ENCODE measurements at regions of chr2 and their contacts with region 1.

Region 1: DNA sequence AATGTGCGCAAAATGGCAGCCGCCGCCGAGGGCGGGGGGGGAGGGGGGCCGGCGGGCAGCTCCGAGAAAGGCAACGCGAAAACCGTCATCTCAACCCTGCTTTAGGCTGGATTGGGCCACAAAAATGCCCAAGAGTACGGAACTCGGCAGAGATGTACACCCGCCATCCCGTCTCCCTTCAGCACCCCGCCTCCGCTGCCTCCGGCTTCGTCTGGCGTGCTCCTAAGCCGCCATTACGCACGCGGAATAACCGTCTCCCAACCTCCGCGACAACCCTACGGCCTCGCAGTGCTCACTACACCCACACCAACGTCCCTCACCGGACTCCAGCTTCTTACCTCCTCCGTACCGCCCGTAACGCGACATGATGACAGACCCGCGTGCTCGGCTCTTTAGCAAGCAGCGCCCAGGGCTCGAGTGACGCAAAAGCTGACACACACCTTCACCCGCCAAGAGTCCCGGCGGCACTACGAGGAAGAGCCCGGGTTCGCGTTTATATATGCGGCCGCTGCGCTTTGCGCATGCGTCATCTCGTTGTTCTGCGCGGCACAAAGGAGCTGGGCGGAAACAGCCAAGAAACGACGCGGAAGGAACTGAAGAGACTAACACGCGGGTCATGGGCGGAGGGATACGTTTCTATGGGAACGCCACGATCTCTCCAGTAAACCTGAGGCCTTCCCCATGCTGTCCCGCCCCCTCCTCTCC is at the start of gene SRSF7:
- DNase-seq: peak; percentile 98
- H3K4me3 Mint-ChIP-seq: peak within 1 kb of the TSS; percentile 90
- H3K27ac Mint-ChIP-seq: peak within 1 kb of the TSS; percentile 97
- H3K4me1 Mint-ChIP-seq: peaks cover 30% of the 10 kb centered on the region
- H3K27me3 Mint-ChIP-seq: no peaks in the 10 kb centered on the region
- CTCF ChIP-seq: no peak
- total RNA-seq, gene SRSF7: 196 and 275 TPM in 2 replicates

Region 2: DNA sequence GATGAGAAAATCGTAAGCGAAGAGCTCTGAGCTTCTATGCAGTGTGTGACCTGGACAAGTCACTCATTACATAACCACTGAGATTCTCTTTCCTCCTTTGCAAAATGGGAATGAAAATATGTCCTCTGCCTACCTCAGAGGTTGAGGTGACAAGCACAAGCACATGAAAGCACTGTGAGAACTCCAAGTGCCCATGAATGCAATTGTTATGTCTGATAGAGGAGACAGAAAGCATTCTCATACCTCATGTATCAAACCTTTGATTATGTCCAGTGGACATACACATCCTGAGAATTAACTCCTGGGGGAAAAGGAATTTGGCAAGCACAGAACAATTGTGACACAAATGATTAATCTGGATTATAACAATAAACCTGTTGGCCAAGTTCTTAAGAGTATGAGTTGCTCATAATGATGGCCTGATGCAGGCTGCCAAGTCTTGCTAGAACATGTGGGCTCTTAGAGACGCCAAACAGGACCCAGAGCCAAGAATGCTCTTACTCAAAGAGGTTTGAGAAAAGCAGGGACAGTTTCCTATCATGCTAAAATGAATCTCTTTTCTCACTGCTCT is 834.4 kb before region 1 on chr2:
- CTCF ChIA-PET with region 1: no interaction called
- POLR2A ChIA-PET with region 1: no interaction called
- intact Hi-C with region 1: no loop called
- DNase-seq: peak; percentile 98
- H3K4me3 Mint-ChIP-seq: peak overlapping the region; percentile 44
- H3K27ac Mint-ChIP-seq: peak overlapping the region; percentile 51
- H3K4me1 Mint-ChIP-seq: peaks cover 32% of the 10 kb centered on the region
- H3K27me3 Mint-ChIP-seq: no peaks in the 10 kb centered on the region
- CTCF ChIP-seq: no peak

Region 3: GRCh38 chr2:38277245-38278116 is 473.6 kb before region 1 on chr2:
- CTCF ChIA-PET with region 1: no interaction called
- POLR2A ChIA-PET with region 1: no interaction called
- intact Hi-C with region 1: no loop called
- DNase-seq: no peak
- H3K4me3 Mint-ChIP-seq: no peak overlapping the region
- H3K27ac Mint-ChIP-seq: no peak overlapping the region
- H3K4me1 Mint-ChIP-seq: peaks cover 8% of the 10 kb centered on the region
- H3K27me3 Mint-ChIP-seq: no peaks in the 10 kb centered on the region
- CTCF ChIP-seq: no peak

Region 4: DNA sequence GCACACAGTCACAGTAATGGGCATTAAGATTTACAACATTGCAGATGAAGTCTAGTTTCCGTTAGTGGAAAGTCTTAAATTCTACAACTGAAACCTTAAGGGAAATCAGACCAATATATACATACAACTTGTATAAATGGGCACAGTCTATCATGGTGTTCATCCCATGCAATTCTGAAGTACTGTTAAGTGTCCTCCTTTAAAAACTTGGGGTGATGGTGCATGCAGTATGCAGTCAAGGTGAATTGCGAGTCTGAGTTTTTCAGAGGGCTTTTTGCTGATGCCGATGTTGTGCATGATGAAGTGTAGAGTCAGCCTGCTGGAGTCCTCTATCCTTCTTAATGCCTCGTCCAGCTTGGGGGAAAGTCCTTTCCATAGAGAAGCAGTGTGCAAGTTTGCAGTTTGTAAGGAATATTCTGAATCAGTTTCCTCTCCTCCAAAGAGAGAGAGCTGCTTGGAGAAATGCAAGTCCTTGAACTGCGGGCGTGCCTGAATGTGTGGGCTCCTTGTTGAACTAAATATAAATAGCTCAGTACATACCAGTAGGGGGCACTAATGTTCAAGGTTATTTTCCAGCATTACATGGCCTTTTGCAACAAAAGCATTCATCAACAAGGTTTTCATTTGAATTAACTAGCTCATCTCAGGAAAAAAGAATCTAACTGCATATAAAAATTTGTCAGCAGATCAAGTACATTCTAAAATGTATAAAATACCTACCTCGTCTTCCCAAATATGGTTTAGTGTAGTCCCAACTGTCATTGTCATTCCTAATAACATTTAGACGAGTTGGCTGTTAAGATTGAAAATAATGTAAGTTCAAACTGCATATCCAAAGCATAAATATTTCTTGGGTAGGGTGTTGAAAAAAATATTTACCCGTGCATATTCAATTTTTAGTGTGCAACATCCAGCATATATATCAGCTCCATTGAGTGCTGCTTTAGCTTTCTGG is 169.6 kb before region 1 on chr2:
- CTCF ChIA-PET with region 1: interaction called, 17 read pairs
- POLR2A ChIA-PET with region 1: interaction called, 14 read pairs
- intact Hi-C with region 1: no loop called
- DNase-seq: peak; percentile 77
- H3K4me3 Mint-ChIP-seq: no peak overlapping the region
- H3K27ac Mint-ChIP-seq: no peak overlapping the region
- H3K4me1 Mint-ChIP-seq: peaks cover 5% of the 10 kb centered on the region
- H3K27me3 Mint-ChIP-seq: no peaks in the 10 kb centered on the region
- CTCF ChIP-seq: peak; percentile 56

Region 5: GRCh38 chr2:38690499-38691294 is 60.3 kb before region 1 on chr2:
- CTCF ChIA-PET with region 1: no interaction called
- POLR2A ChIA-PET with region 1: interaction called, 20 read pairs
- intact Hi-C with region 1: no loop called
- DNase-seq: peak; percentile 84
- H3K4me3 Mint-ChIP-seq: no peak overlapping the region
- H3K27ac Mint-ChIP-seq: peak overlapping the region; percentile 86
- H3K4me1 Mint-ChIP-seq: peaks cover 25% of the 10 kb centered on the region
- H3K27me3 Mint-ChIP-seq: no peaks in the 10 kb centered on the region
- CTCF ChIP-seq: no peak

Region 6: GRCh38 chr2:38771632-38772031 is 20.6 kb after region 1 on chr2:
- CTCF ChIA-PET with region 1: no interaction called
- POLR2A ChIA-PET with region 1: interaction called, 13 read pairs
- intact Hi-C with region 1: no loop called
- DNase-seq: no peak
- H3K4me3 Mint-ChIP-seq: no peak overlapping the region
- H3K27ac Mint-ChIP-seq: no peak overlapping the region
- H3K4me1 Mint-ChIP-seq: no peaks in the 10 kb centered on the region
- H3K27me3 Mint-ChIP-seq: peaks cover 19% of the 10 kb centered on the region
- CTCF ChIP-seq: no peak

Region 7: DNA sequence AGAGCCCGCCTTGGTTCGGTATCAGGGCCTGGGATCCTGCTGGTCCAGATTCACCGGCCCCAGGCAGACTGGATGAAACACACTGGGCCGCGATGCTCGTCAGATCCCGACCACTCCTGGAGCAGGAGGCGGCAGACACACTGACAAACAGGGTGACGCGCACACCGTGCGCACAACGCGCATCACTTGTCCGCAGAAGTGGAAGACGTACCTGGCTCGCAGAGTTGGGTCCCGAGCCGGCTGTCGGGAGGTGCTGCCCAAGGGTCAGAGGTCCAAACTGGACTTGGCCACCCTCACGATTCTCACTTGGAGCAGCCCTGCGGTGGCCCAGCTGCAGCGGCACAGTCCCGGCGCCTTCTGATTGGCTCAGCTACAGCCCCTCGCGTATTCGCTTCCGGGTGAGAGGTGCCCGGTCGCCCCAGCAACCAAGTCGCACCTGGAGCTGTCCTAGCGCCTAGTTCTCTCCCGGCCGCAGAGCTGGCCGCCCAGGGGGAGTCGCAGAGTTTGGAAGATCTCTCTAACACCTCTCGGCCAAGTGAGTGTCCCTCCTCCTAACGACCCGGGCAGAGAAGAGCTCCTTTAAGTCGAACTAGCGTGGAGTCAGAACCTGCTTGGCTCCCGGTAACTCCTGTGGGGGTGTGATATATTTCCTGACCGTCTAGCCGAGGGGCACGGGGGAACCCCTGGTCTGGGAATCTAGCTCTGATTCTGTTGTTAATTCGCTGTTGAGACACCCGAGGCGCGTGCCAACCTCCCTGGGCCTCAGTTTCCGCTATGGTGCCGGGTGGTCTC is 124.7 kb after region 1 on chr2 and contains the starts of genes DHX57 and MORN2:
- CTCF ChIA-PET with region 1: no interaction called
- POLR2A ChIA-PET with region 1: interaction called, 11 read pairs
- intact Hi-C with region 1: no loop called
- DNase-seq: peak; percentile 82
- H3K4me3 Mint-ChIP-seq: peak within 1 kb of the TSS; percentile 91
- H3K27ac Mint-ChIP-seq: peak within 1 kb of the TSS; percentile 89
- H3K4me1 Mint-ChIP-seq: peaks cover 6% of the 10 kb centered on the region
- H3K27me3 Mint-ChIP-seq: no peaks in the 10 kb centered on the region
- CTCF ChIP-seq: no peak
- total RNA-seq, gene DHX57: 17.9 and 21.3 TPM in 2 replicates
- total RNA-seq, gene MORN2: 13.9 and 14.8 TPM in 2 replicates